ENCODE measurements at regions of chr12 and their contacts with region 1.

Region 1: GRCh38 chr12:92928962-92929915 is at the start of gene EEA1:
- DNase-seq: peak; percentile 97
- H3K4me3 Mint-ChIP-seq: peak within 1 kb of the TSS; percentile 90
- H3K27ac Mint-ChIP-seq: peak within 1 kb of the TSS; percentile 93
- H3K4me1 Mint-ChIP-seq: peaks cover 28% of the 10 kb centered on the region
- H3K27me3 Mint-ChIP-seq: no peaks in the 10 kb centered on the region
- total RNA-seq, gene EEA1: 15.6 to 17.6 TPM

Region 2: DNA sequence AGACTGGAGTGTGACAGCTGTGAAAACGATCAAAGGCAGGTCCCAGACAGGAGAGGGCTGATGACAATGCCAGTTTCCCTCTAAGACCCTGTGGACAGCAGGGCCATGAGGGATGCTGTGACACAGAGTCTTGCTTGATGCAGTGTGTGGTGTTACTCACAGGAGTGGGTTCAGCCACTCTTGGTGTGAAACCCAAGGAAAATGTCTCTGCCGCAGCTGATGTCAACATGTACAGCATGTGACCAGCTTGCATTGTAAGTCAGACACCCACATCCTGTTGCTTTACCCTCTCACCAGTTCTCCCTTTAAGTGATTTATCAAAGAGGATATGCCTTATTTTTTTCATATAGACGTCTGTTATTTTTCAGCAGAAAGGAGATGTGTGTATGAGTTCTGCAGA is 1052.2 kb before region 1 on chr12:
- CTCF ChIA-PET with region 1: no interaction called
- intact Hi-C with region 1: loop called (anchors 5 kb)
- DNase-seq: peak; percentile 94
- H3K4me3 Mint-ChIP-seq: peak overlapping the region; percentile 67
- H3K27ac Mint-ChIP-seq: peak overlapping the region; percentile 94
- H3K4me1 Mint-ChIP-seq: peaks cover 67% of the 10 kb centered on the region
- H3K27me3 Mint-ChIP-seq: no peaks in the 10 kb centered on the region

Region 3: DNA sequence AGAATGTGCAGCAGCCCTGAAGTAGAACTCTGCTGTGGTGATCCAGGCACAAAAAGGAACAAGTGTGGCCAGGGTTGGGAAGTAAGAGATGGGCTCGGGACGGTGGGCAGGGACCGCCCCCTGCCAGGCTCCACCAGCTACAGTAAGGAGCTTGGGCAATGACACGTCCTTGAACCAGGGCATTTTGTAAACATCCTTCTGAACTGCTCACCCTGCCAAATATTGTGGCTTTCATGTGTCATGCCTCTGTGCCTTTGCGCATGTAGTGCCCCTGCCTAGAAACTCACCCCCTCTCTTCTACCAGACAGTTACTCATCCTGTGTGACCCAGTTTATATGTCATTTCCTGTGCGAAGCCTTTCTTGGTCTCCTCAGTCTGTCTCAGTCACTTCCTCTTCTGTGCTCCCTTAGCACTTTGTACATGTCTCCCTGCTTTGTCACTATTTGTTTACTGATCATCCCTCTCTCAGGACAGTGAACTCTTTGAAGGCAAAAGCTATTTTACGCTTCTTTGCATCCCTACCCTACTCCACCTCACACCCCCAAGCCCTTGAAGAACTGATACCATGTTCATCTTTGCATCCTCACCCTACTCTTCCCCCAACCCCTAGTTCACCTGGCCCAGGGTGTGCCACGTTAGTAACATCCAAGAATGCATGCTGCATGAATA is 335.4 kb before region 1 on chr12:
- CTCF ChIA-PET with region 1: no interaction called
- intact Hi-C with region 1: loop called (anchors 5 kb)
- DNase-seq: peak; percentile 87
- H3K4me3 Mint-ChIP-seq: peak overlapping the region; percentile 55
- H3K27ac Mint-ChIP-seq: peak overlapping the region; percentile 96
- H3K4me1 Mint-ChIP-seq: peaks cover 78% of the 10 kb centered on the region
- H3K27me3 Mint-ChIP-seq: no peaks in the 10 kb centered on the region

Region 4: DNA sequence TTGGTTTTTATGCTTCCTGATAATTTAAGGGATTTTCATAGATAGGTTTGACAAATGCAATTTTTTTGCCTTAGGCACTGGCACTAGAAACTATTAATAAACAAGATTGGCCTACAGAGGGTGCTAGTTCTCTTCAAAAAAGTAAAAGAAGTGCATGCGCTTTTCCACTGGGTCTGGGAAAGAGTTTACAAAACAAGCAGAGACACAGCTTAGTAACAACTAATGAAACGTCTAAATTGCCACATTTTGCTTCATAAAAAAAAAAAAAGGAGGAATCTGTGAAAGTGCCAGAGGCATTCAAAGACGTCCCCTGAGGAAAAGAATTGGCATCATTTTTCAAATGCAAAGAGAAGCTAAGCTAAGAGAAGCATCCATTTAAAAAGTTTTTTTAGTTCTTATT is 58.1 kb after region 1 on chr12:
- CTCF ChIA-PET with region 1: interaction called, 4 read pairs
- intact Hi-C with region 1: loop called (anchors 1 kb)
- DNase-seq: no peak
- H3K4me3 Mint-ChIP-seq: peak overlapping the region; percentile 26
- H3K27ac Mint-ChIP-seq: peak overlapping the region; percentile 78
- H3K4me1 Mint-ChIP-seq: peaks cover 26% of the 10 kb centered on the region
- H3K27me3 Mint-ChIP-seq: no peaks in the 10 kb centered on the region

Region 5: GRCh38 chr12:93419388-93420034 is 490.3 kb after region 1 on chr12:
- CTCF ChIA-PET with region 1: no interaction called
- intact Hi-C with region 1: loop called (anchors 1 kb)
- DNase-seq: no peak
- H3K4me3 Mint-ChIP-seq: no peak overlapping the region
- H3K27ac Mint-ChIP-seq: no peak overlapping the region
- H3K4me1 Mint-ChIP-seq: peaks cover 88% of the 10 kb centered on the region
- H3K27me3 Mint-ChIP-seq: no peaks in the 10 kb centered on the region

Region 6: DNA sequence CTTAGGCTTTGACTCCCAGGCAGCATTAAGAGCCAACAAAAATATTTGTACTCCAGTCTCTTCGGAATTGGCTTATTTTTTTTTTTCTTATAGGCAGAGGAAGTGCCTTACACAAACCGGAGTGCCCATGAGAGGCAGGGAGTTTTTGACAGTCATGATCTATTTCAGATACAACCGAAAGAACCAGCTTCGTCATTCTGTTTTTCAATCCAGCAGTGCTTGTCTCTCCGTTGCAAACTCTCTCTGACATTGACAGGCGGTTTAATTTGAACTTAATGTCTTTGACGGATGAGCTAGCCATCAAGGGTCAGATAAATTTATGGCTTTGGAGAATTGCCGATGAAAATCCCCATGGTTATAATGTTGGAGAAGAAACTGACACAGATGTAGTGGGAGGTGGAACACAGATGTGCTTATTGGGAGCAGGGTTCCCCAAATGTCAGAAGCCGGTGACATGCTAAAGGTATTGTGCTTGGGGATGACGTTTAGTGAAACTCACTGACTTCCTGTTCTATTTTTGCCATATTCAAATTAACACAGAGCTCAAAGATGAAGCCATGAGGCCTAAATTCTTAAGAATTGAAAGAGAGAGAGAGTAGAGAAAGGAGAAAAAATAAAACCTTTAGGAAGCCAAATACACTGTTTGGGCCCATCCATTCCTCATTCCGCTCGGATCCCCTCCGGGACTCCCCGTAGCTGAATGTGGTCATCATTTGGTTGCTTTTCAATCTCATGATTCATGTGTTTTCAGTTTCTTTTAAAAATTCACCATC is 1278.8 kb after region 1 on chr12:
- CTCF ChIA-PET with region 1: no interaction called
- intact Hi-C with region 1: loop called (anchors 10 kb)
- DNase-seq: peak; percentile 67
- H3K4me3 Mint-ChIP-seq: peak overlapping the region; percentile 70
- H3K27ac Mint-ChIP-seq: peak overlapping the region; percentile 97
- H3K4me1 Mint-ChIP-seq: peaks cover 62% of the 10 kb centered on the region
- H3K27me3 Mint-ChIP-seq: no peaks in the 10 kb centered on the region

Measured in activated naive CD4-positive, alpha-beta T cell treated with anti-CD3 and anti-CD28 coated beads for 36 hours (primary cell).